Activated CD8-positive, alpha-beta T cell treated with anti-CD3 and anti-CD28 coated beads for 36 hours (primary cell): ENCODE measurements at regions of chr2 and their contacts with region 1.

Region 1: GRCh38 chr2:56183643-56184499 is at the start of gene CCDC85A:
- DNase-seq: peak; percentile 78
- ATAC-seq: peak; percentile 96
- H3K4me3 Mint-ChIP-seq: no peak within 1 kb of the TSS
- H3K27ac Mint-ChIP-seq: no peak within 1 kb of the TSS
- H3K4me1 Mint-ChIP-seq: peaks cover 6% of the 10 kb centered on the region
- H3K27me3 Mint-ChIP-seq: peaks cover 41% of the 10 kb centered on the region
- CTCF ChIP-seq: peak; percentile 83
- total RNA-seq, gene CCDC85A: not detected

Region 2: GRCh38 chr2:55901325-55901724 is 282.5 kb before region 1 on chr2:
- CTCF ChIA-PET with region 1: no interaction called
- POLR2A ChIA-PET with region 1: no interaction called
- intact Hi-C with region 1: no loop called
- DNase-seq: no peak
- ATAC-seq: no peak
- H3K4me3 Mint-ChIP-seq: no peak overlapping the region
- H3K27ac Mint-ChIP-seq: no peak overlapping the region
- H3K4me1 Mint-ChIP-seq: no peaks in the 10 kb centered on the region
- H3K27me3 Mint-ChIP-seq: no peaks in the 10 kb centered on the region
- CTCF ChIP-seq: no peak

Region 3: GRCh38 chr2:56001947-56002346 is 181.9 kb before region 1 on chr2:
- CTCF ChIA-PET with region 1: no interaction called
- POLR2A ChIA-PET with region 1: no interaction called
- intact Hi-C with region 1: no loop called
- DNase-seq: no peak
- ATAC-seq: no peak
- H3K4me3 Mint-ChIP-seq: no peak overlapping the region
- H3K27ac Mint-ChIP-seq: no peak overlapping the region
- H3K4me1 Mint-ChIP-seq: no peaks in the 10 kb centered on the region
- H3K27me3 Mint-ChIP-seq: no peaks in the 10 kb centered on the region
- CTCF ChIP-seq: no peak

Region 4: DNA sequence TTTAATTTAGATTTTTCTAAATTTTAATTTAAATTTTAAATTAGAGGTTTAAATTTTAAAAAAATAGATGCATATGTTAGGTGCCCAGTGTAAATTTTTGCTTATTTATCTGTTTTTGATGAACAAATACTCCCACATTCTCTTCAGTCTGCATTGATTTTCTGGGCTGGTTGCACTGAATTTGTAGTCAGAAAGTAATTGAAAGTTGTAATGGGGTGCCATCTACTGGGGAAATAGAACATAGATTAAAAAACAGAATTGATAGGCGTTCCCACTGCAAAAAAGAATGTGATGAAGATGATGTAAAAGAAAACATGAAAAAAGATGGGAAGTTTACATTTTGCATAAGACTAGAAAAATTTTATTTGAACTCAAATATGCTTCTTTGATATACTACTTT is 51.7 kb before region 1 on chr2:
- CTCF ChIA-PET with region 1: no interaction called
- POLR2A ChIA-PET with region 1: no interaction called
- intact Hi-C with region 1: no loop called
- DNase-seq: no peak
- ATAC-seq: no peak
- H3K4me3 Mint-ChIP-seq: no peak overlapping the region
- H3K27ac Mint-ChIP-seq: no peak overlapping the region
- H3K4me1 Mint-ChIP-seq: no peaks in the 10 kb centered on the region
- H3K27me3 Mint-ChIP-seq: no peaks in the 10 kb centered on the region
- CTCF ChIP-seq: peak; percentile 51

Region 5: DNA sequence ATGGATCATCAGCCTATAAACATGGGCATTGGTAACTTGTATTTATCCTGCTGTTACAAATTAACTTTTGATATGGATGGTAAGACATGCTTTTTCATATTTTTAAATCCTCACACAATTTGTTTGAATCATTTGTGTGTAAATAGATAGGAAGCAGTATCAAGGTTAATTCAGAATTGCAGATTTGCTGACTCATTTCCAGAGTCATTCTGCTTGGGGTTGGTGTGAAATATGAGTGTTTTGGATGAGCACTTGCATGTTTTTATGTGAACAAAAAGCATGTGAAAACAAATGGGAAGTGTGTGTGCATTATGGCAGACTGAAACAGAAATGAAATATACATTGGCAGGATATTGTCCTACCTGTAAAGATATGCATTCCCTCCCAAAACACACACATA is 11.7 kb after region 1 on chr2:
- CTCF ChIA-PET with region 1: interaction called, 11 read pairs
- POLR2A ChIA-PET with region 1: interaction called, 3 read pairs
- intact Hi-C with region 1: no loop called
- DNase-seq: no peak
- ATAC-seq: no peak
- H3K4me3 Mint-ChIP-seq: no peak overlapping the region
- H3K27ac Mint-ChIP-seq: no peak overlapping the region
- H3K4me1 Mint-ChIP-seq: no peaks in the 10 kb centered on the region
- H3K27me3 Mint-ChIP-seq: peaks cover 1% of the 10 kb centered on the region
- CTCF ChIP-seq: no peak

Region 6: DNA sequence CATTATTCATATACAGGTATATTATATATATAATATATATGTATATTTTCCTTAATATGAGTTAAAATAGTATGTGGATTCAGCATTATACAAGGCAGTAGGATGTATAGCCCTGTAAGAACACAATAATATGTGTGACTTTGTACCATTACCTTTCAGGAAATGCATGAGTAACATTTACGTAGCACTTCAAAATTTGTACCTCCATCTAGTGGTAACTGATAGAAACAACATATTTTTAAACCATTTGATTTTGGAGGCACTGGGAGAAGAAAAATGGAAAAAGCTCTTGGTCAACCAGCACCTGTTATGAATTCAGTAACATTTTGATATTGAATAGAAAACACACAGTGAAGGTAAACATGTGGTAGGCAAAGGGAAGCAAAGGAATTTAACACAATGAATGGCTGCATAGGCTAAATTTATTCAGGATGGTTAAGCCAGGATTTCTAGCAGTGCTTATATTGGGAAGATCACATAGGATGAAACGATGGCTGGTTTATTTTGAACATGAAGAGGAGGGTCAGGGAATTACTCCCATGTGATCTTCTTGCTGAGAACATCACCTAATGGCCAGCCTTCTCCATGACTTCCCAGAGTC is 565.4 kb after region 1 on chr2:
- CTCF ChIA-PET with region 1: interaction called, 7 read pairs
- POLR2A ChIA-PET with region 1: no interaction called
- intact Hi-C with region 1: loop called (anchors 10 kb)
- DNase-seq: no peak
- ATAC-seq: no peak
- H3K4me3 Mint-ChIP-seq: no peak overlapping the region
- H3K27ac Mint-ChIP-seq: no peak overlapping the region
- H3K4me1 Mint-ChIP-seq: no peaks in the 10 kb centered on the region
- H3K27me3 Mint-ChIP-seq: no peaks in the 10 kb centered on the region
- CTCF ChIP-seq: peak; percentile 33

Region 7: GRCh38 chr2:57516698-57517340 is 1332.9 kb after region 1 on chr2:
- CTCF ChIA-PET with region 1: interaction called, 7 read pairs
- POLR2A ChIA-PET with region 1: no interaction called
- intact Hi-C with region 1: loop called (anchors 5 kb)
- DNase-seq: no peak
- ATAC-seq: peak; percentile 56
- H3K4me3 Mint-ChIP-seq: no peak overlapping the region
- H3K27ac Mint-ChIP-seq: no peak overlapping the region
- H3K4me1 Mint-ChIP-seq: no peaks in the 10 kb centered on the region
- H3K27me3 Mint-ChIP-seq: no peaks in the 10 kb centered on the region
- CTCF ChIP-seq: peak; percentile 70